ENCODE measurements at regions of chr18 and their contacts with region 1.

Region 1: GRCh38 chr18:12376718-12377555 is at the start of gene AFG3L2:
- DNase-seq: peak; percentile 99 to 100
- H3K4me3 ChIP-seq: peak within 1 kb of the TSS; percentile 65 to 89 (median 78)
- H3K27ac ChIP-seq: peak within 1 kb of the TSS; percentile 90
- H3K4me1 ChIP-seq: peaks cover 3 to 15% (median 7%) of the 10 kb centered on the region in 4 experiments
- H3K27me3 ChIP-seq: no peaks in the 10 kb centered on the region
- CTCF ChIP-seq: no peak
- EP300 ChIP-seq: no peak
- POLR2A ChIP-seq: peak; percentile 73 to 79
- RAD21 ChIP-seq: no peak
- total RNA-seq, gene AFG3L2: 81.7 and 84.8 TPM in 2 replicates

Region 2: GRCh38 chr18:12336171-12336613 is 40.7 kb before region 1 on chr18:
- CTCF ChIA-PET with region 1: interaction called, 3 read pairs
- POLR2A ChIA-PET with region 1: interaction called, 10 read pairs
- DNase-seq: peak; percentile 63 to 74
- H3K4me3 ChIP-seq: peak overlapping the region in 2 of 4 experiments; percentile 8 to 43; a peak in 2 of 8 replicates
- H3K27ac ChIP-seq: peak overlapping the region; percentile 79
- H3K4me1 ChIP-seq: peaks cover 15 to 41% (median 39%) of the 10 kb centered on the region in 4 experiments
- H3K27me3 ChIP-seq: no peaks in the 10 kb centered on the region
- CTCF ChIP-seq: no peak
- EP300 ChIP-seq: peak in 1 of 2 experiments; percentile 80; a peak in 1 of 3 replicates
- POLR2A ChIP-seq: 0 out of 3 replicates have a peak, but pooled peaks of 1 of the 2 experiments have one; percentile 7
- RAD21 ChIP-seq: no peak

Region 3: DNA sequence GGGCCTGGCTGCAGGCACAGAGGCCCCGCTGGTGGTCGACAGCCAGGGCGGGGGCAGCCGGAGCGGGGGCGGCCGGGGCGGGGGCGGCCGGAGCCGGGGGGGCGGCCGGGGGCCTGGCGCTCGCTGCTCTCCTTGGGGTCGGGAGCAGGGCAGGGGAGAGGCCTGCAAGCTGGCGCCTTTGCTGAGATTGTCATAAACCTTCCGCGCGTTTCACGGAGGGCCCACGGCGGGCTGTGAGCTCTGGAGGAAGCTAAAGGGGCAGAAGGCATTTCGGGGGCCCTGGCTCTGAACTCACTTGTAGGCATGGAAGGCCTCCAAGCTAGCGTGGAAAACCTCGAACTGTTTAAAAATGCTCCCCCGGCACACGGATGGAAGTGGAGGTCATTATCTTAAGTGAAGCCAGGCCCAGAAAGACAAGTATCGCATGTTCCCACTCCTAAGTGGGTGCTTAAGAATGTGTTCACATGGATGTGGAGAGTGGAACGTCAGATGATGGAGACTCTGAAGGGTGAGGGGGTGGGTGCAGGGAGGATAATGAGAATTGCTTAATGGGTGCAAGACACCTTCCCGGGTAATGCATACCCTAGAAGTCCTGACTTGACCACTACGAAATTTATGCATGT is 31.4 kb after region 1 on chr18:
- CTCF ChIA-PET with region 1: no interaction called
- POLR2A ChIA-PET with region 1: interaction called, 11 read pairs
- DNase-seq: no peak
- H3K4me3 ChIP-seq: peak overlapping the region; percentile 44 to 75 (median 56)
- H3K27ac ChIP-seq: no peak overlapping the region
- H3K4me1 ChIP-seq: peaks cover 0 to 8% (median 2%) of the 10 kb centered on the region in 4 experiments; a peak in 5 of 7 replicates
- H3K27me3 ChIP-seq: peaks cover 0 to 18% (median 15%) of the 10 kb centered on the region in 4 experiments; a peak in 6 of 7 replicates
- CTCF ChIP-seq: no peak
- EP300 ChIP-seq: no peak
- POLR2A ChIP-seq: no peak
- RAD21 ChIP-seq: no peak

Region 4: DNA sequence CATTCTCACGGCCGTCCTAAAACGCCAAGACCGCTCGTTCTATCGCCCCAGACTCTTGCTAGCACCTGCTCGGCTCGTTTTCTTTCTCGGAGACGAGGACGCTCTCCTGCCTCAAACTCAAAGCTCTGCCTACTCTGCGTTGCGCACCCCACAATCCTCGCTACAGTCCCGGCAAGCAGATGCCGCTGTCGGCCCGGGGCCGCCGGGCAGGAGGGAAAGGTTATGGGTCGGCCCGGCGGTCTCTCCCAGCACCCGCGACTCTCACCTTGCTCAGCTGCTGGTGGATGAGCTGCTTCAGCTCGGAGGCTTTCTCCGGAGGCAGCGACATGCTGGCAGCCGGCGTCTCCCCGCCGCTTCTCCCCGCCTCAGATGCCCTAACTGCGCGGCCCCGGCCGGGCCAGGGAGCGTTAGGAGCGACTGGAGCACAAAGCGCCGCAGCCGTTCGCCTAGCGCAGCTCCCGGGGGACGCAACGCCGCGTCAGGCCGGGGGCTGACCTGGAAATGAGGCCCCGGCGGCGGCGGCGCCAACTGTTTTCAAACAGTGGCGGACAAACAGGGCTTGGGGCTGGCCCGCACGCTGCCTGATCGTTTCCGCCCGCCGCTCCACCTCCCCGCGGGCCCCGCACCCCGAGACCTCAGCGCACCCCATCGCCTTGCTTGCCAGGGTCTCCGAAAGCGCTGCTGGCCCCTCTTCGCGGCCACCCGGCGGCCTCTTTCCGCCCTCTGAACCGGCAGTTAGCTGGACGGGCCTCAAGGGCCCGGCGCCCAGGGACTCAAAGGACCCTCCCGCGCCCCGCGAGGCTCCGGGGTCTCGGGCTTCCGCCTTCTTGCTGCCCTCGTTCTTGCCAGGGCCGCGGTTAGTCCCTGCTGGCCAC is 325.5 kb after region 1 on chr18 and contains the starts of genes CEP76 and PSMG2:
- CTCF ChIA-PET with region 1: no interaction called
- POLR2A ChIA-PET with region 1: interaction called, 12 read pairs
- DNase-seq: peak; percentile 65 to 90
- H3K4me3 ChIP-seq: peak within 1 kb of the TSS; percentile 95 to 97 (median 95)
- H3K27ac ChIP-seq: peak within 1 kb of the TSS; percentile 98
- H3K4me1 ChIP-seq: peaks cover 0 to 10% (median 2%) of the 10 kb centered on the region in 4 experiments; a peak in 3 of 7 replicates
- H3K27me3 ChIP-seq: no peaks in the 10 kb centered on the region
- CTCF ChIP-seq: peak in 1 of 3 experiments; percentile 6; a peak in 1 of 4 replicates
- EP300 ChIP-seq: no peak
- POLR2A ChIP-seq: peak; percentile 28 to 95
- RAD21 ChIP-seq: no peak
- total RNA-seq, gene CEP76: 14.3 and 18.1 TPM in 2 replicates
- total RNA-seq, gene PSMG2: 76.5 and 79.3 TPM in 2 replicates